ENCODE measurements at regions of chr22 and their contacts with region 1.

Region 1: DNA sequence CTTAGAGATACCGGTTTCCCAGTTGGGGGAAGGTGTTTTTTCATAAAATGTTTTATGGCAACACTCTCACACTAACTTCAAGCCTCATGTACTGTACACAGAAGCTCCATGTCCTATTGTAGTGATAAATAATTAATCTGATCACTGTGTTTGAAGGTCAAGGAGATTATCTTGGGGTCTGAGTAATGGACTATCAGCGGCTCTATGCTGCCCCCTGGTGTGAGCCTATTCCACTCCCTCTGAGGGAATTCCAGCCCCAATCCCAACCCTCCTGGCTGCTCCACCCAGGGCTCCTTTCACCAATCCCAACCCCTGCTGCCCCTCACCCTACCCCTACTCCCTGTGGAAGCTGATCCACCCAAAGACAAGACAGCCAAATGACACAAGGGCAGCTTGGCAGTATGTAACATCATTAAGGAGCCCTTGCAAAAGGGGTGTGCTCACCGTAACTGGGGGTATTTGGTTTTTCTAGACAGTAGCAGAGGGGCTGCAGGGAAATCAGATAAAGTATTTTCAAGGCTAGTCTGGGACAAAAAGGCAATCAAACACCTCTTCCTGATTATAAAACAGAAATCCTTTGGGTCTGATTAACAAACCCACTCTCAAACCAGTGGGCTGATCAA is 22.3 kb downstream of the HPS4 start:
- DNase-seq: no peak
- H3K4me3 ChIP-seq: no peak overlapping the region
- H3K27me3 ChIP-seq: no peaks in the 10 kb centered on the region
- CTCF ChIP-seq: peak; percentile 87

Region 2: GRCh38 chr22:26398741-26399153 is 62.6 kb before region 1 on chr22:
- CTCF ChIA-PET with region 1: interaction called, 101 read pairs
- POLR2A ChIA-PET with region 1: no interaction called
- DNase-seq: peak; percentile 7
- H3K4me3 ChIP-seq: no peak overlapping the region
- H3K27me3 ChIP-seq: peaks cover 8% of the 10 kb centered on the region
- CTCF ChIP-seq: peak; percentile 85

Region 3: GRCh38 chr22:26428515-26429457 is 32.5 kb before region 1 on chr22 and contains the start of gene ASPHD2:
- CTCF ChIA-PET with region 1: interaction called, 23 read pairs
- POLR2A ChIA-PET with region 1: no interaction called
- DNase-seq: no peak
- H3K4me3 ChIP-seq: peak within 1 kb of the TSS; percentile 44
- H3K27me3 ChIP-seq: peaks cover 3% of the 10 kb centered on the region; the same call in 1 of the 2 replicates
- CTCF ChIP-seq: no peak
- polyA plus RNA-seq, gene ASPHD2: 2.3 and 2.5 TPM in 2 replicates

Region 4: GRCh38 chr22:26447584-26448329 is 13.5 kb before region 1 on chr22:
- CTCF ChIA-PET with region 1: interaction called, 23 read pairs
- POLR2A ChIA-PET with region 1: no interaction called
- DNase-seq: no peak
- H3K4me3 ChIP-seq: no peak overlapping the region
- H3K27me3 ChIP-seq: no peaks in the 10 kb centered on the region
- CTCF ChIP-seq: no peak

Region 5: DNA sequence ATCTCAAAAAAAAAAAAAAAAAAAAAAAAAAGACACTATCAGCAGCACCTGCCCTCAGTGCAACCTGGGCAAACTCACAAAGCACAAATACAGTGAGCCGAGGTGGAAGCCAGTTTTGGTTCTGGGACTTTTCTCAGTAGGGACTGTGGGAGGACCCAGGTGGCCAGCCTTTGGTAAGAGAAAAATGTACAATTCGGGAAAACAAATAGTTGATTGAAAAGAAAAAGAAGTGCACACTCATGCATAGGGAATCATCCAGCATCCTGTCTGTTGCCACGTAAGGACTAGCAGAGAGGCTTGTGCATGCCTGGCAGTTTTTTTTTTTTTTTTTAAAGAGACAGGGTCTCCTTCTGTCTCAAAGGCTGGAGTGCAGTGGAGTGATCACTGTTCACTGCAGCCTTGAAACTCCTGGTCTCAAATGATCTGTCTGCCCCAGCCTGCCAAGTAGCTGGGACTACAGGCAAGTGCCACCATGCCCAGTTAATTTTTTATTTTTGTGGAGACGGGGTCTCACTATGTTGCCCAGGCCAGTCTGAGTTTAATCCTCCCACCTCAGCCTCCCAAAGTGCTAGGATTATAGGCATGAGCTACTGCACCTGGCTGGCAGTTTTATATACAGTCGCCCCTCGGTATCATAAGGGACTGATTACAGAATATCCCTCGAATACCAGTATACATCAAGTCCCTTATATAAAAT is 91.9 kb after region 1 on chr22:
- CTCF ChIA-PET with region 1: no interaction called
- POLR2A ChIA-PET with region 1: no interaction called
- DNase-seq: peak; percentile 46
- H3K4me3 ChIP-seq: no peak overlapping the region
- H3K27me3 ChIP-seq: no peaks in the 10 kb centered on the region
- CTCF ChIP-seq: no peak

Measured in BJ (cell line).